CD8-positive, alpha-beta memory T cell (primary cell): ENCODE measurements at regions of chr17 and their contacts with region 1.

Region 1: GRCh38 chr17:72996791-72997190 is 95.7 kb downstream of the SLC39A11 start:
- DNase-seq: no peak
- H3K4me3 ChIP-seq: no peak overlapping the region
- H3K4me3 Mint-ChIP-seq: no peak overlapping the region
- H3K27ac ChIP-seq: no peak overlapping the region
- H3K27ac Mint-ChIP-seq: no peak overlapping the region
- H3K4me1 ChIP-seq: no peaks in the 10 kb centered on the region
- H3K4me1 Mint-ChIP-seq: peaks cover 0 to 7% (median 4%) of the 10 kb centered on the region in 3 donors
- H3K27me3 ChIP-seq: no peaks in the 10 kb centered on the region
- H3K27me3 Mint-ChIP-seq: no peaks in the 10 kb centered on the region

Region 2: GRCh38 chr17:72985881-72986720 is 10.7 kb before region 1 on chr17:
- CTCF ChIA-PET with region 1: interaction called, 12 read pairs
- POLR2A ChIA-PET with region 1: no interaction called
- DNase-seq: peak; percentile 6 to 48 (median 16)
- H3K4me3 ChIP-seq: no peak overlapping the region
- H3K4me3 Mint-ChIP-seq: no peak overlapping the region
- H3K27ac ChIP-seq: no peak overlapping the region
- H3K27ac Mint-ChIP-seq: peak overlapping the region in 1 of 8 donors; percentile 21
- H3K4me1 ChIP-seq: no peaks in the 10 kb centered on the region
- H3K4me1 Mint-ChIP-seq: peaks cover 1 to 18% (median 10%) of the 10 kb centered on the region in 3 donors
- H3K27me3 ChIP-seq: no peaks in the 10 kb centered on the region
- H3K27me3 Mint-ChIP-seq: no peaks in the 10 kb centered on the region